Heart left ventricle (tissue), 16 donors: ENCODE measurements at regions of chr3 and their contacts with region 1.

Region 1: DNA sequence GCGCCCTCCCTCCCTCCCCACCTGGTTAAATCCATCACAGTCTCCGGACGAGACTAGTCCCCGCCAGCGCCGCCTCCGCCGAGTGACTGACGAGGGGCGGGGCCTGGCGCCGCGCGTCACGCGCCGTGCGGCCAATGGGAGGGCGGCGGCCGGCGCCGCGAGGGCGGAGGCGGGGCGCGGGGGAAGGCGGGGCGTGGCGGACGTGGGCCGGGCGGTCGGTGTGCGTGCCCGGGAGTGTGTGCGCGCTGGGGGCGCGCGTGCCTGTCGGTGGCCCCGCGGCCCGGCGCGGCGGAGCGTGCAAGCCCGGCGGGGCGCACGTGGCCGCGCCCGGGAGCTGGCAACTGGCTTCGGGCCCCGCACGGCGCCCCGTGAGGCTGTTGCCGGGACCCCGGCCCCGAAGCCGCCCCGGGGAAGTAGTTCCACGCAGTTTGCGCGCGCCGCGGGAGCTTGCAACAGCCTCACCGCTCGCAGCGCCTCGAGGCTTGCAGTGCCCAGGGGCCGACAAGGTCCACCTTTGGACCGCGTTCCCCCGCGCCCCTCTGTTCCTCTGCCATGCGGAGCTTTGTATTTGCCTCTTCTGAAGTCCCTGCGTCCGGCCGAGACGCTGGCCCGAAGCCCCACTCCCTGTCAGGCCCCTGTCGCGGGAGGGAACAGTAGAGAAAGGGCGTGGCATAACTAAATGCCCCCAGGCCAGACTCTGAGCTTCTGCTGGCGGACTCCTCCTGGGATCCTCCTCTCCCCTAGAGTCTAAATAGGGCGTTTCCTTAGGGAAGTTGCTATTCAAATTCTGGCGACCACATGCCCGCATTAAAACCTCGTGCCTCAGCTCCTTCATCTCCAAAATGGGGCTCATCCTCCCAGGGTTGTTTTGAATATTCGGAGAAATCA is 400.9 kb downstream of the SHQ1 start:
- DNase-seq: peak; percentile 94 to 97 (median 95)
- ATAC-seq: peak; percentile 88 to 99 (median 98)
- H3K4me3 ChIP-seq: peak overlapping the region; percentile 48 to 97 (median 82)
- H3K27ac ChIP-seq: peak overlapping the region; percentile 66 to 92 (median 88)
- H3K4me1 ChIP-seq: peaks cover 0 to 39% (median 25%) of the 10 kb centered on the region in 12 donors
- H3K27me3 ChIP-seq: no peaks in the 10 kb centered on the region
- CTCF ChIP-seq: peak in 2 of 12 donors; percentile 5 to 8
- POLR2A ChIP-seq: no peak

Region 2: DNA sequence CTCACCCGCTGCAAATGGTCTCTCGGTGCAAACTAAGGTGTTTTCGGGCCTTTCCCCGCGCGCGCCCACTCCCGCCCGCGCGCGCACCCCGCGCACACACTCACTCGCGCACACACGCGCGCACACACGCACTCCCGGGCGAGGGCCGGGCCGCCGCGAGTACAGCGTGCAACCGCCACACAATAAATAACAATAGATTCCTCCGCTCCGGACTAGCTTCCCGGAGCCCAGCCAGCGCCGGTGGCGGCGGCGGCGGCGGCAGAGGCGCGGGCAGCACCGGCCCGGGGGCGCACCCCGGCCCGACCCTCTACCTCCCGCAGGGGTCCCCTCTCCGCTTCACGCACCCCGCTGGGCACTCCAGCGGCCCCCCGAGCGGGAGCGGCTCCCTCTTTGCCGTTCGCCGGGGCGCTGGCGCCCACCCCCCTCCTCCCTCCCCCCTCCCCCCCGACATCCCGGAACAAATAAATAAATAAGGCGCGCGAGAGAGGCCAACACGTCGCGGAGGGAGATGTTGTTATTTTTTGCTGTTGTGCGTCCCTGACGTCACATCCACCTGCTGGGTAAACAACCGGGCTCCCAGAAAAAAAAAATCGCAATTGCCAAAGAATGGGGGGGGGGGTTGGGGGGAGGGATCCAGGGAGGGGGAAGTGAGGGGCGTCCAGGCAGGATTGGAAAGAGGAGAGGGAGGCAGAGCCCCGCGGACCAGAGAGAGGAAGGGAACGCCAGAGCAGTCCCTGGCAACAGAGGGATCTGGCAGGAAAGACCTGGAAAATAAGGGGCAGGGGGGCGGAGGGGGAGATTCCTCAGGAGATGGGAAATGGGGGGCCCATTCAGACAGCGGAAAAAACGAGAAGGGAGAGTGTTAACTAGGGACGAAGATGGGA is 863.5 kb before region 1 on chr3 and contains the start of gene FOXP1:
- intact Hi-C with region 1: no loop called
- DNase-seq: peak; percentile 77 to 89 (median 80)
- ATAC-seq: peak; percentile 44 to 80 (median 72)
- H3K4me3 ChIP-seq: peak within 1 kb of the TSS; percentile 65 to 95 (median 82)
- H3K27ac ChIP-seq: peak within 1 kb of the TSS; percentile 92 to 99 (median 98)
- H3K4me1 ChIP-seq: peaks cover 0 to 46% (median 21%) of the 10 kb centered on the region in 12 donors
- H3K27me3 ChIP-seq: no peaks in the 10 kb centered on the region
- CTCF ChIP-seq: no peak
- POLR2A ChIP-seq: peak in 1 of 2 donors; percentile 65
- total RNA-seq, gene FOXP1: 33.0 to 67.8 (median 44.5) TPM

Region 3: GRCh38 chr3:71955240-71956068 is 491.8 kb before region 1 on chr3:
- intact Hi-C with region 1: loop called in 3 of 10 experiments (anchors 5 to 10 kb)
- DNase-seq: peak; percentile 62 to 75 (median 72)
- ATAC-seq: peak in 3 of 4 donors; percentile 62 to 76 (median 76)
- H3K4me3 ChIP-seq: no peak overlapping the region
- H3K27ac ChIP-seq: no peak overlapping the region
- H3K4me1 ChIP-seq: peaks cover 0 to 10% (median 5%) of the 10 kb centered on the region in 12 donors
- H3K27me3 ChIP-seq: peaks cover 0 to 8% (median 0%) of the 10 kb centered on the region in 9 donors
- CTCF ChIP-seq: peak; percentile 49 to 84 (median 74)
- POLR2A ChIP-seq: no peak

Region 4: DNA sequence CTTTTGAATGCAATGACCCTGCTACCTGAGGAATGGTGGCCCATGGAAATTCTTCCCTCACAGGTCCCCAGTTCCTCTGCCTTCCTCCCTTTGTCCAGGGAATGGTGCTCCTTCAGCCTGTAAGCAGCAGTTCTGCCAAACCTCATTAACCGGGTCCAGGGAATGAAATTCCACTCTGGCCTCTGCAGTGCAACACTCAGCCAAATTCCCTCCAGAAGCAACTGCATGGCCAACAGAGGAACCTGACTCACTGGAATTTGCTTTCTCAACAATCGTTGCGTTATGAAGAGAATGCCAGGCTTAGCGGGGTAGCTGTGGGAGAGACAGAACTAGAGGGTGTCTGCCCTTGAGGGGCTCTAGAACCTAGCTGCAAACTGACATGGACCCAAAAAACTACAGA is 212.9 kb before region 1 on chr3:
- intact Hi-C with region 1: no loop called
- DNase-seq: peak in 1 of 5 donors; percentile 31
- ATAC-seq: peak; percentile 38 to 68 (median 64)
- H3K4me3 ChIP-seq: no peak overlapping the region
- H3K27ac ChIP-seq: no peak overlapping the region
- H3K4me1 ChIP-seq: peaks cover 0 to 12% (median 0%) of the 10 kb centered on the region in 12 donors
- H3K27me3 ChIP-seq: no peaks in the 10 kb centered on the region
- CTCF ChIP-seq: no peak
- POLR2A ChIP-seq: no peak

Region 5: GRCh38 chr3:72258361-72259141 is 188.8 kb before region 1 on chr3:
- intact Hi-C with region 1: no loop called
- DNase-seq: peak in 1 of 5 donors; percentile 21
- ATAC-seq: peak in 2 of 4 donors; percentile 22 to 28
- H3K4me3 ChIP-seq: no peak overlapping the region
- H3K27ac ChIP-seq: no peak overlapping the region
- H3K4me1 ChIP-seq: peaks cover 0 to 32% (median 16%) of the 10 kb centered on the region in 12 donors
- H3K27me3 ChIP-seq: no peaks in the 10 kb centered on the region
- CTCF ChIP-seq: no peak
- POLR2A ChIP-seq: no peak

Region 6: DNA sequence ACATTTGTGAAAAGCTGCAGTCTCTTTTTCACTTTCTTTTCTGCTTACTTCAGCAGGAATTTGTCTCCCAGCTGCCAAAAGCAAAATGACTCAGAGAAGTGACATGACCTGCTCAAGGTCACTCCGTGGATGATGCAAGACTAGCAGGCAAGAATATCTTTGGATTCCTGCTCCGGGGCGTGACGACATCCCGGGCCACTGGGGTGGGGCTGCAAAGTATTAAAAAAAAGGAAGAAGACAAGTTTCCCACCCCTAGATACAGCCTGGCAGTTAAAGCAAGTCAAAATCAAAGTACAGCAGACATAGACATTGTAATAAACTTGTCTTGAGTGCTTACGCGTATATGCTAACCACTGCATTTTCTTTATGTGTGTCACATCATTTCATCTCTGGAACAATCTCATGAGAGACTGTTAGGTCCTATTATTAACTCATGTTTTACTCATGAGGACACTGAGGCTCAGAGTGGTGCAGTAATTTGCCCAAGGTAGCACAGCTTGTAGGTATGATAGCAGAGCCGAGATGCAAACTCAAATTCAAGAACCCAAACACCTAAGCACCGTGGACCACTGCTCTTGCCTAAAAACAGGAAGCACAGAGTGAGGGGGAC is 177.1 kb before region 1 on chr3:
- intact Hi-C with region 1: loop called in 2 of 10 experiments (anchors 2 to 5 kb)
- DNase-seq: peak; percentile 83 to 91 (median 87)
- ATAC-seq: peak; percentile 83 to 95 (median 92)
- H3K4me3 ChIP-seq: no peak overlapping the region
- H3K27ac ChIP-seq: peak overlapping the region in 6 of 12 donors; percentile 14 to 69 (median 26)
- H3K4me1 ChIP-seq: peaks cover 0 to 59% (median 43%) of the 10 kb centered on the region in 12 donors
- H3K27me3 ChIP-seq: no peaks in the 10 kb centered on the region
- CTCF ChIP-seq: no peak
- POLR2A ChIP-seq: no peak

Region 7: DNA sequence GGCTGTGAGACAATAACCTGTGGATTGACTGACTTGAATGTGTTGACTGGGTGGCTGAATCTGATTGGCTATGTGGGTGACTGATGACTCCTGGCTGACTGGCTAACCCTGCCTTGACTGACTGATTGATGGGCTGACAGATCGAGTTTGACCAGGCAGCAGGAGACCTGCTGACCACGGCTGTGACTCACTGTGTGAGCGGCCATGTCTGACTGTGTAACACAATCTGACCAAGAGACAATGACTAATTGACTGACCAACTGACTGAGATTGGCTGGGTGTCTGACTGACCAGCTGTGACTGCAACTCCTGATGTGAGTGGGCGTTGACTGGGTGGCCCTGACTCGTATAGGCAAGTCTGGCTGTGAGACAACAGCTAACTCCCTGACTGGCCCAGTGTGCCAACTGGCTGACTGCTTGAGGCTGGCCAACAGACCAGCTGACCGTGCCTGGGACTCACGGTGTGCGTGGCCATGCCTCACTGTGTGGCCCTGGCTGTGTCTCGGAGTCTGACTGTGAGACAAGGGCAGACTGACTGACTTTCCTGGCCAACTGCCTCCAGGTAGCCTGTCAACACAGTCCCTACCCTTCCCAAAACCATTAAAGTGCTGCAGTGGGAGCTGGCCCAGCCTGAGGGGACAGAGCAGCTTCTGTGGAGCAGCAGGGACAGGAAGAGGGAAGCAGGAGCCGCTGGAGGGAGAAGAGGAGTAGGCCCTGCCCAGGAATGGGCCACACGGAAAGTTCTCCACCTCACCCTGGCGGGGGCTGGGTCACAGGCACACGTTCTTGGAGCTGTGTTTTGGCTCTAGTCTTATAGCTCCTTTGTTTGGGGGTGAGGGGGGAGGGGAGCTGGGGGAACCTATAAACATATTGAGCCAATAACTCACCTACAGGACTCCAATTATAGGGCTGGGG is 107.9 kb before region 1 on chr3:
- intact Hi-C with region 1: loop called in 2 of 10 experiments (anchors 10 kb)
- DNase-seq: peak in 2 of 5 donors; percentile 45 to 79
- ATAC-seq: peak in 2 of 4 donors; percentile 35 to 75
- H3K4me3 ChIP-seq: no peak overlapping the region
- H3K27ac ChIP-seq: no peak overlapping the region
- H3K4me1 ChIP-seq: peaks cover 0 to 28% (median 14%) of the 10 kb centered on the region in 12 donors
- H3K27me3 ChIP-seq: no peaks in the 10 kb centered on the region
- CTCF ChIP-seq: no peak
- POLR2A ChIP-seq: no peak